ENCODE measurements at regions of chr10 and their contacts with region 1.

Region 1: GRCh38 chr10:130110246-130111112 is at the start of gene C10orf143:
- DNase-seq: peak; percentile 97
- H3K4me3 ChIP-seq: peak within 1 kb of the TSS; percentile 54 to 85
- H3K27ac ChIP-seq: peak within 1 kb of the TSS; percentile 93 to 95
- H3K4me1 ChIP-seq: peaks cover 5% of the 10 kb centered on the region
- H3K27me3 ChIP-seq: no peaks in the 10 kb centered on the region
- CTCF ChIP-seq: no peak
- POLR2A ChIP-seq: peak; percentile 70
- total RNA-seq, gene C10orf143: 5.1 to 5.6 TPM

Region 2: GRCh38 chr10:129833994-129834739 is 276.3 kb before region 1 on chr10:
- intact Hi-C with region 1: no loop called
- DNase-seq: no peak
- H3K4me3 ChIP-seq: no peak overlapping the region
- H3K27ac ChIP-seq: no peak overlapping the region
- H3K4me1 ChIP-seq: no peaks in the 10 kb centered on the region
- H3K27me3 ChIP-seq: no peaks in the 10 kb centered on the region
- CTCF ChIP-seq: no peak
- POLR2A ChIP-seq: no peak

Region 3: DNA sequence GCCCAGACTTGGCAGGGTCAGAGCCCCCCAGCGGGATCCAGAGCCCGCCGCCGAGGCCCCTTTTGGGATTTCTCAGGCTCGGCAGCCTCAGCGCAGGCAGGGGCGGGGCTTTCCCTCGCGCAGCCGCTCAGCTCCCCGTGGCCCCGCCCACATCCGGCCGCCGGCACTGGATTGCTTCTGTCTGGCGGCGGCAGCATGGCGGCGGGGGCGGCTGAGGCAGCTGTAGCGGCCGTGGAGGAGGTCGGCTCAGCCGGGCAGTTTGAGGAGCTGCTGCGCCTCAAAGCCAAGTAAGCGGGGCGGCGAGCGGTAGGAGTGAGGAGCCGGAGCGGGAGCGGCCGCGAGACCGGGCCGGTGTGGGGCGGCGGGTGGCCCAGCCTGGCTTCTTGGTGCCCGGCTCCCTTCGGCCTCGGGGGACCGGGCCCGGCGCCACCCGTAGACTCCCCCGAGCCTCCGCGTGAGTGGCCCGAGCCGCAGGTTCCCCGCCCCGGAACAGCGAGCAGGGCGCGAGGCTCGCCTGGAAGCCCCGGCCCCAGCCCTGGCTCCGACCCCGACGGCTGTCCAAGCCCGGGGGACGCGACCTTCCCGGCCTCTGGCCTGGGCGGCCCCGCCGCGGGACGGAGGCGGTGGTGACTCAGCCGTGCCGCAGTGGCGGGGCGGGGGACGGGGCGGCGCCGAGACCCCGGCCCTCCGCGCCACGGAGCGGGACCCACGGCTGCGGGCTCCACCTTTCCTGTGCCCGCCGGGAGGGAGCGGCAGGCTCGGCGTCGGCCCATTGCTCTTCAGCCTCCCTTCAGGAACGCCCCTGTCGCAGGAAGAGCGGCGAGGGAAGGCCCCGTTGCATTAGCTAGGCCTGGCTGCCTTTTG is 26.0 kb after region 1 on chr10 and contains the start of gene GLRX3:
- intact Hi-C with region 1: loop called (anchors 2 kb)
- DNase-seq: peak; percentile 86
- H3K4me3 ChIP-seq: peak within 1 kb of the TSS; percentile 86 to 92
- H3K27ac ChIP-seq: peak within 1 kb of the TSS; percentile 76 to 78
- H3K4me1 ChIP-seq: peaks cover 9% of the 10 kb centered on the region
- H3K27me3 ChIP-seq: no peaks in the 10 kb centered on the region
- CTCF ChIP-seq: peak in 1 of 4 experiments; percentile 24
- POLR2A ChIP-seq: peak; percentile 75
- total RNA-seq, gene GLRX3: 32.6 to 40.7 TPM

Region 4: DNA sequence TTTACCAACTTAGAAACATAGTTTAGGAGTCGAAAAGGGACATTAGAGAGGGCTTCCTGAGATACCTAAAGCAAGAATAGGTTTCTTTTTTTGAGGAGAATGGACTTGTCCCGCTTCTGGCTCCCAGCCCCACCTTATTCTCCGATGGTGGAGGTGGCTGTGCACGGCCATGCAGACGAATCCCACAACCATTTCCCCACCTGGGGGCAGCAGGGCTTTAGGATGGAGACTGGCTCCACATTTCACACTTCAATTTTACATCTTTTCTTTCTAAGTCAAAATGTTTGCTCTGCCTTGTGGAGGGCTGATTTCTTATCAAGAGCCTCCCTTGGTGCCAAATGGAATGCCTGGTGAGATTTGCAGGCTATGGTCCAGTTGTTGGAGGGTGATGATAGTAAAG is 144.2 kb after region 1 on chr10:
- intact Hi-C with region 1: no loop called
- DNase-seq: no peak
- H3K4me3 ChIP-seq: no peak overlapping the region
- H3K27ac ChIP-seq: no peak overlapping the region
- H3K4me1 ChIP-seq: no peaks in the 10 kb centered on the region
- H3K27me3 ChIP-seq: no peaks in the 10 kb centered on the region
- CTCF ChIP-seq: no peak
- POLR2A ChIP-seq: no peak